Activated CD4-positive, alpha-beta T cell treated with anti-CD3 and anti-CD28 coated beads, Interleukin-2, amount 10 ng/mL, durations not matched to agents 24 days and 14 days (primary cell): ENCODE measurements at regions of chr2 and their contacts with region 1.

Region 1: GRCh38 chr2:230582851-230583283 is 129.8 kb upstream of the CAB39 start:
- DNase-seq: peak; percentile 72
- H3K4me3 Mint-ChIP-seq: peak overlapping the region; percentile 39
- H3K27ac Mint-ChIP-seq: peak overlapping the region; percentile 85
- H3K4me1 Mint-ChIP-seq: peaks cover 31% of the 10 kb centered on the region
- H3K27me3 Mint-ChIP-seq: no peaks in the 10 kb centered on the region

Region 2: DNA sequence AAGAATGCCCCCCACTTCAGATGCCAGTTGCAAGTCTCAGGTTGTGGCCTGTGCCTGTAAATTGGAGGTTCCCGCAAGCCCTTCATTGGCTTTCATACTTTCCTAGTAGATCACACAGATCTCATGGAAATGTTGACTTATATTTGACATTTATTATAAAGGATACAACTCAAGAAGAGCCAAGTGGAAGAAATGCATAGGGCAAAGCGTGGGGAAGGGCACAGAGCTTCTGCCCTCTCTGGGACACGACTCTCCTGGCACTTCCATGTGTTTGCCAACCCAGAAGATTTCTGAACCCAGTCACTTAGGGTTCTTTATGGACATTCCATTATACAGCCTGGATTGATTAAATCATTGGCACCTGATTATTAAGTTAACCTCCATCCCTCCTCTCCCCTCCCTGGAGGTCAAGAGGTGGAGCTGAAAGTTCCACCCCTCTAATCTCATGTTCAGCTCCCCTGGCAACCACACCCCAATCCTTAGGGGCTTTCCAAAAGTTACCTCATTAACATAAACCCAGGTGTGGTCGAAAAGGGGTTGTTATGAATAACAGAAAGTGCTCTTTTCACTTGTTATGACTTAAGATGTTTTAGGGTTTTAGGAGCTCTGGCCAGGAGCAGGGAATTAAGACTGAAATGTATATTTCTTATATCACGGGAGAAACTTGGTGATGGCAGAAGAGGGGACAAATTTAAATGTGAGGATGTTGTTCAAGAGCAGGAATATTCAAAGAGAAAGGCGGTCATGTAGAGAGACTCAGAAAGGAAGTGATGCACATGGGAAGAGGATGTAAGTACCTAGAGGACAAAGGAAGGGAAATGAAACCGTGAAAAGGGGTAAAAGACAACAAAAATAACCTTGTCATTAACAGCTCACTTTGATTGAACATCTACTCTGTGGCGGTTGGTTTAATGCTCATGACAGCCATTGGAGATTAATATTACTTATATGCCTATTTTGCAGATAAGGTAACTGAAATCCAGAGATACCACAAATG is 135.1 kb before region 1 on chr2:
- intact Hi-C with region 1: loop called (anchors 2 kb)
- DNase-seq: peak; percentile 82
- H3K4me3 Mint-ChIP-seq: peak overlapping the region; percentile 59
- H3K27ac Mint-ChIP-seq: peak overlapping the region; percentile 87
- H3K4me1 Mint-ChIP-seq: peaks cover 55% of the 10 kb centered on the region
- H3K27me3 Mint-ChIP-seq: no peaks in the 10 kb centered on the region

Region 3: DNA sequence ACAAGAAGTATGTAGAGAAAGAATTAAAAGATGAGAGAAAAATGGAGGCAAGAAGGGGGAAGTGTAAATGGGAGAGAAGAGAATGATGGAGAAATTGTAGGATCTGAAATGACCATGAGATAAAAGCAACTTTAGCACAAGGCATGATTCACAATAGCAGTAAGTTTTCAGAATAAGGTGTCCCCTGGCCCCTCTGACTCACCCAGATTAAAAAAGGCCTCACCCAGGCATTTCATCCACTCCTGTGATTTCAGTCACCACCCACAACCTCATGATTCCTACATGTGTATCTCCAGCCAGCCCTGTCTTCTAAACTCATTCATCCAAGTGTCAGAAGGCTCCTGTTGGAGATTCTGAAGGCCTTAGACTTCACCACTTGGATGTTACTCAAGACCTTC is 110.2 kb before region 1 on chr2:
- intact Hi-C with region 1: loop called (anchors 5 kb)
- DNase-seq: peak; percentile 72
- H3K4me3 Mint-ChIP-seq: peak overlapping the region; percentile 5
- H3K27ac Mint-ChIP-seq: peak overlapping the region; percentile 85
- H3K4me1 Mint-ChIP-seq: peaks cover 34% of the 10 kb centered on the region
- H3K27me3 Mint-ChIP-seq: no peaks in the 10 kb centered on the region

Region 4: GRCh38 chr2:230537531-230537976 is 45.3 kb before region 1 on chr2:
- intact Hi-C with region 1: loop called (anchors 5 kb)
- DNase-seq: peak; percentile 76
- H3K4me3 Mint-ChIP-seq: peak overlapping the region; percentile 40
- H3K27ac Mint-ChIP-seq: peak overlapping the region; percentile 70
- H3K4me1 Mint-ChIP-seq: peaks cover 37% of the 10 kb centered on the region
- H3K27me3 Mint-ChIP-seq: no peaks in the 10 kb centered on the region

Region 5: DNA sequence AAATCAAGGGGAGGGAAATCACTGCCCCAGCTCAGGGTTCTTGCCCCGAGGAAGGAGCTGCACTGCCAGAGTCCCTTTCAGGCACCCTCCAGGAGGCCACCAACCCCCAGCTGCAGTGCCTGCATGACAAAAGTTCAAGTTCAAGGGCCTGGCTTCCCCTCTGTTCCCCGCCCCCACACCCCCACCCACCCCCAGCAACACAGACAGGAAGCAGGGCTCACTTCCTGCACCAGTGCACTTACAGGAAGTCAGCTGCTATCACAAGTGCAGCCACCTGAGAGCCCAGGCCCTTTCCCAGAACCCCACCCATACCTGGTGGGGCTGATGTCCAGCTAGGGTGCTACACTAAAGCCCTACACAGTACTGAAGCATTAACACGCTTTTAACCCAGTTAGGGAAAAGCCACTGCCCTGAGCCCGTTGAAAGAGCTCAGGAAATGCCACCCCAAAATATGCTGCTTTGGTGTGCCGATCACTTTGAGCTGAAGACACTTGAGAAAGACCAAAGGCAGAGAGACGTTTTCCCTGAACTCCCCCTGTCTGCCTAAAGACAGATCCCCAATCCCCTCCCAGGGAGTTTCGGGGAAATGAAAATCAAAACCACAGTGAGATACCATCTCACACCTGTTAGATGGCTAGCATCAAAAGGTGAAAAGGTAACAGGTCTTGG is 19.8 kb after region 1 on chr2:
- intact Hi-C with region 1: loop called (anchors 2 kb)
- DNase-seq: peak; percentile 84
- H3K4me3 Mint-ChIP-seq: peak overlapping the region; percentile 50
- H3K27ac Mint-ChIP-seq: peak overlapping the region; percentile 88
- H3K4me1 Mint-ChIP-seq: peaks cover 49% of the 10 kb centered on the region
- H3K27me3 Mint-ChIP-seq: no peaks in the 10 kb centered on the region